HepG2 (cell line): ENCODE measurements at regions of chr12 and their contacts with region 1.

Region 1: GRCh38 chr12:107364875-107365518 is 271.6 kb upstream of the CRY1 start:
- DNase-seq: peak; percentile 76
- ATAC-seq: peak; percentile 96
- H3K4me3 ChIP-seq: no peak overlapping the region
- H3K27ac ChIP-seq: peak overlapping the region; percentile 16
- H3K4me1 ChIP-seq: peaks cover 22% of the 10 kb centered on the region
- H3K27me3 ChIP-seq: no peaks in the 10 kb centered on the region
- CTCF ChIP-seq: no peak
- EP300 ChIP-seq: 0 out of 4 replicates have a peak, but pooled peaks of 1 of the 2 experiments have one; percentile 20
- POLR2A ChIP-seq: no peak
- RAD21 ChIP-seq: no peak

Region 2: GRCh38 chr12:107393043-107393717 is 28.2 kb after region 1 on chr12:
- CTCF ChIA-PET with region 1: no interaction called
- POLR2A ChIA-PET with region 1: no interaction called
- in situ Hi-C with region 1: no loop called
- intact Hi-C with region 1: loop called (anchors 1 kb)
- DNase-seq: no peak
- ATAC-seq: no peak
- H3K4me3 ChIP-seq: no peak overlapping the region
- H3K27ac ChIP-seq: no peak overlapping the region
- H3K4me1 ChIP-seq: peaks cover 25% of the 10 kb centered on the region
- H3K27me3 ChIP-seq: no peaks in the 10 kb centered on the region
- CTCF ChIP-seq: no peak
- EP300 ChIP-seq: no peak
- POLR2A ChIP-seq: no peak
- RAD21 ChIP-seq: no peak

Region 3: DNA sequence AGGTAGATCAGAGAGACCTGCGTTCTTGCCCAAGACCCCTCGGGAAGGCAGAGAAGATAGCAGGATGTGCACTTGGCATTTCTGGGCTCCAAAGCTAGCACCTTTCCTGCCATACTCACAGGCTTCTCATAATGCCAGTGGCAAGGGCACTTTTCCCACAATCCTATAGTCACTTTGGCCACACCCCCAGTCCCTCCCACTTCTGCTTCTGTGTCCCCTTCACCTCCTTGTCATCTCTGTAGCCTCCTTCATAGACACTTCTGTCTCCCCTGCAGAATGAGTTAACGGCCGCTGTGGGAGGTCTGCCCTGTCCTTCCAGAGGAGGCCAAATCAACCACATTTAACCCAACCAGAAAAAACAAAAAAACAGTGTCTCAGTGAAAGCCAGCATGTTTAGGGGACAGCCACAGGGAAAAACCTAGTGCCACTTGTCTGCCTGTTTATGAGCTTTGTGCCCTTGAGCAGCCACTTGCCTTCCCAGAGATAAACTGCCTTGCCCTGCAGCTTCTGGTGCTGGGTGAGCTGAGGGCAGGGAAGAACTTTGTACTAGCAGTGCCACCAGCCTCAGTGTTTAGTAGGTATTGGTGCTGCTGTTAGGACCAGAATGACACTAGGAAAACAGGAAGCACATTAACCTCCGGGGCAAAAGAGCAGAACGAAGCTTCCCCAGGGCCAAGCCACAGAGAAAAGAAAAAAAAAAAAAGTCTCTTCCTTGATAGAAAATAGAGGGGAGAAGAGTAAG is 127.6 kb after region 1 on chr12:
- CTCF ChIA-PET with region 1: no interaction called
- POLR2A ChIA-PET with region 1: no interaction called
- in situ Hi-C with region 1: no loop called
- intact Hi-C with region 1: no loop called
- DNase-seq: peak; percentile 40
- ATAC-seq: peak; percentile 82
- H3K4me3 ChIP-seq: peak overlapping the region in 1 of 3 experiments; percentile 41; a peak in 2 of 6 replicates
- H3K27ac ChIP-seq: peak overlapping the region; percentile 76
- H3K4me1 ChIP-seq: peaks cover 31% of the 10 kb centered on the region
- H3K27me3 ChIP-seq: no peaks in the 10 kb centered on the region
- CTCF ChIP-seq: no peak
- EP300 ChIP-seq: no peak
- POLR2A ChIP-seq: no peak
- RAD21 ChIP-seq: no peak